ENCODE measurements at regions of chr4 and their contacts with region 1.

Region 1: DNA sequence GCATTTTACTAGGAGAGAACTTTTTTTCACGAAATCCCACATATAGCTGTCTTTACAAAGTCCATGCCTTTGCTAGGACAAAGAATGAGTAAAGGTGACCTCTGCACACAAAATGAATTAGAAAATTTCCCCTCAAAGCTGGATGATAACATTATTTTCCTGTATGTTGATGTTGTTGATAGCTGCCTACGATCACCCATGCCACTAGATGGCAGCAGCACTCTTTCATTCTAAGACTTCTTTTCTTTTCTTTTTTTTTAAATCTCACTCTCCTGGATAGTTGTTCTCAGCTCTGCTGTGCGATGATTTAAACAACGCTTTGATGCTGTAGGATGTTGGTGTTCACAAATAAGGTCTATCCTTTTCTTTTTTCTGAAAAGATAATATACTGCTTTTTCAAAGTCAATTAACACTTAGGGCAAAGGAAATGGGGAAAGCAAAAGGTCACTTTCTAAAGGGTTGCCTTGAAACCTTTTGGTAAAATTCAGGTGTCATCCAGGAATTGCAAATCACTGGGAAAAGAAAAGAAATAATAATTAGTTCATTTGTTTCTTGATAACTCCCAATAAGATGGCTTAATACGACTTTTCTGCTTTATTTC is 266.8 kb downstream of the C4orf33 start:
- DNase-seq: peak; percentile 69
- H3K4me3 ChIP-seq: no peak overlapping the region
- H3K27ac ChIP-seq: no peak overlapping the region
- H3K4me1 ChIP-seq: no peaks in the 10 kb centered on the region
- CTCF ChIP-seq: peak; percentile 95

Region 2: DNA sequence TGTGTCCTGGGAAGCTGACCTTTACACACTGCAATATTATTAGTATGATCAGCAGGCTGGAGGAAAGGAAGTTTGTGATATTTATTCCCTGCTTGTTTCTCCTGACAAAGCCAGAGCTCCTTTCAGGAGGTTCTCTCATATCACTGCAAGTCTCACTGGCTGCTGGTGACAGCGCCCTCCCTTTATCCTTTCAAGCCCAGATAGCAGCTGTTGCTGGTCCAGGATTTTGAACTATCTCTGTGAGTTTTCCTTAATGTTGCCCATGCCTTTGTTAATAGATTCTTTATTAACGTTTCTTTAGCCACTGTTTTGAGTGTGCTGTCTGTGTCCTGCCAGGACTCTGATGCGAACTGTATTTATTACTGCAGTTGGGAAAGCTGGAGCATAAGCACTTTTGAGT is 251.8 kb after region 1 on chr4:
- CTCF ChIA-PET with region 1: no interaction called
- POLR2A ChIA-PET with region 1: no interaction called
- intact Hi-C with region 1: no loop called
- DNase-seq: no peak
- H3K4me3 ChIP-seq: no peak overlapping the region
- H3K27ac ChIP-seq: no peak overlapping the region
- H3K4me1 ChIP-seq: no peaks in the 10 kb centered on the region
- CTCF ChIP-seq: no peak

Region 3: DNA sequence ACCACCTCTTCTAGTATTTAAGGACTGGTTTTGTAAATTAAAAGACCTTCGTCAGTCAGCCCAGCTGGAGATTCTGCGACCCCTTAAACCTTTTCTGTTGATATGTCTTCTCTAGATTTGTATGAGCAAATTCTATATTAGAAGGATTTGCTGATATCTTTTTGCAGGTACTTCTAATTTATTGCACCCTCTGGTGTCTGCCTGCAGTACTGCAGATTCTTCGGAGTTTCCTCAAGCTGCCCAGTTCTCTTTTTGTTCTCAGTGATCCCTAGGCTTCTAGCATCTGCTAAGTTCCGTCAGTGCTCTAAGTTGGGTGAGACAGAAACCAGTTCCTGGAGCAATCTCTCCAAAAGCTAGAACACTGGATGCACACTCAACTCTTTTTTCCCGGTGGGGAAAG is 278.4 kb after region 1 on chr4:
- CTCF ChIA-PET with region 1: interaction called, 5 read pairs
- POLR2A ChIA-PET with region 1: interaction called, 3 read pairs
- intact Hi-C with region 1: loop called (anchors 1 kb)
- DNase-seq: peak; percentile 49
- H3K4me3 ChIP-seq: no peak overlapping the region
- H3K27ac ChIP-seq: no peak overlapping the region
- H3K4me1 ChIP-seq: no peaks in the 10 kb centered on the region
- CTCF ChIP-seq: peak; percentile 89